Activated CD4-positive, alpha-beta memory T cell treated with anti-CD3 and anti-CD28 coated beads for 36 hours (primary cell): ENCODE measurements at regions of chr7 and their contacts with region 1.

Region 1: DNA sequence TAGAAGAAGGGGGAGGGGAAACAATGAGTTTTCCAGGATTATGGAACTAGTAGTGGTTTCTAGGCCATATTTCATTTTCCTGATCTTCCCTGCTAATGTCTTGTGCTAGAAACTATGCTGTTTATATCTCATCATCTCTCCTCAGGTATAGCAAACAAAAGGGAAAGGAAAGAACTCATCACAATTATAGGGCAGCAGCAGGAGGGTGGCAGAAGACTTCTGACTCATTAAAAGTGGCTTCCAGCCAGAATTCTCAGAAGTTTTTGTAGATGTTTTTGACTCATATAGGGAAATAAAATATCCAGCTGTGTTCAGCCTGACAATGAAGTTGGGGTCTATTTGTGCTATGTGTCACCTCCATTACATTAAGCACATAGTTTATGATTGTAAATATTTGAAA is 6.5 kb downstream of the AHR start:
- DNase-seq: peak; percentile 25
- H3K4me3 Mint-ChIP-seq: peak overlapping the region; percentile 56
- H3K27ac Mint-ChIP-seq: peak overlapping the region; percentile 83
- H3K4me1 Mint-ChIP-seq: peaks cover 26% of the 10 kb centered on the region
- H3K27me3 Mint-ChIP-seq: no peaks in the 10 kb centered on the region

Region 2: DNA sequence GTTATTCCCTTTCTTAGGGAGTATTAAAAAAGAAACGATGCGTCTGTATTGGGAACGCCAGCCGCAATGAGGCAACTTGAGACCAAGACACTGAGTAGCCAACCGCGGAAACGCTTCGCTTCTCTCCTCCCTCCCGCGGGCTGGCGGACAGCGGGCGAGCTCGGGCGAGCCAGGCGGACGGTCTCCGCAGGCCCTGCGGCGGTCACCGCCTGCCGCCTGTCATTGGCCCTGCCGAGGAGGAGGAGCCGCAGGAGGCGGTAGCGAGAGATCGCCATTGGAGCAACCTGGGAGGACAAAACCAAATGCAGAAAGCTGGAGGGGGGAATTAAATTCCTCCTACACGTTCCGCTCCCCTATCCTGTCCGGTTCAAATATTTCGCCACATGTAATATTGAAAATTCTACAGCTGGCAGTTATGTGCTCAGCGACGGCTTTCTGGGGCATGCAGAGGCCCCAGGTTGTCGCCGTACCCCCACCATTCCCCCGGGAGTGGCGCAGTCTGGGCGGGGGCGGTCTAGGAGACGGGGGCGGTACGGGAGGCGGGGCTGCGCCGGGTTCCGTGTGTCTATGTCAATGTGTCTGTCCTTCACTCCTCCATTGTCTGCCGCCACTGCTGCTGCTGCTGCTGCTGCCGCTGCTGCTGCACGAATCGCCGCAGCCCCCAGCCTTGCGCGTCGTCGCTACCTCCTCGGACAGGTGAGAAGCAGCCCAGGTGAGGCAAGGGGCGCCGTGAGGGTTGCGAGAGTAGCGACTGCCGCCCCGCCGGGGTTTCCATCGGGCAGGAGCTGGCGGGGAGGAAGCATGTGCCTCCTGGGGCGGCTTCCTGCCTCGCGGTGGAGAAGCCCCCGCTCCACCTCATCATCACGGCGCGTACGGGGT is 659.1 kb before region 1 on chr7 and contains the starts of genes ANKMY2 and BZW2:
- CTCF ChIA-PET with region 1: no interaction called
- POLR2A ChIA-PET with region 1: no interaction called
- intact Hi-C with region 1: loop called (anchors 1 kb)
- DNase-seq: peak; percentile 95
- H3K4me3 Mint-ChIP-seq: peak within 1 kb of the TSS; percentile 99
- H3K27ac Mint-ChIP-seq: peak within 1 kb of the TSS; percentile 98
- H3K4me1 Mint-ChIP-seq: peaks cover 53% of the 10 kb centered on the region
- H3K27me3 Mint-ChIP-seq: no peaks in the 10 kb centered on the region
- total RNA-seq, gene ANKMY2: 7.8 to 8.4 TPM
- total RNA-seq, gene BZW2: 84.2 to 89.8 TPM

Region 3: DNA sequence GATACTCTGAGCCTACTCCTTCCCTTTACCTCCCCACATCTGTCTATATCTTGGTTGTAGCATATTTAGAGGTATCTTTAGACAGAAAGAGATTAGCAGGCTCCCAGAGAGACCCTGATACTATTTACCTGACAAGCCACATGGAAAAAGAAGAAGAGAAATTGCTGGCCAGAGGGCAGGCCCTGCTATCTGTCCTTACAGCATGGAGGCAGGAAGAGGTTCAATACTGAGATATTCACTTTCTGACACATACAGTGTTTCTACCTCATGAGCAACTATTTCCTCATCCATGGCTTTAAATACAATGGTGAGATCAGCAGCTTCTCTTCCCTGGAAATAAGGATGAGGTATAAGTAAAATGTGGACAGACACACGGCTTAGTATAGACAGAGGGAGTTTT is 585.2 kb before region 1 on chr7:
- CTCF ChIA-PET with region 1: no interaction called
- POLR2A ChIA-PET with region 1: no interaction called
- intact Hi-C with region 1: no loop called
- DNase-seq: no peak
- H3K4me3 Mint-ChIP-seq: no peak overlapping the region
- H3K27ac Mint-ChIP-seq: no peak overlapping the region
- H3K4me1 Mint-ChIP-seq: peaks cover 11% of the 10 kb centered on the region
- H3K27me3 Mint-ChIP-seq: no peaks in the 10 kb centered on the region

Region 4: DNA sequence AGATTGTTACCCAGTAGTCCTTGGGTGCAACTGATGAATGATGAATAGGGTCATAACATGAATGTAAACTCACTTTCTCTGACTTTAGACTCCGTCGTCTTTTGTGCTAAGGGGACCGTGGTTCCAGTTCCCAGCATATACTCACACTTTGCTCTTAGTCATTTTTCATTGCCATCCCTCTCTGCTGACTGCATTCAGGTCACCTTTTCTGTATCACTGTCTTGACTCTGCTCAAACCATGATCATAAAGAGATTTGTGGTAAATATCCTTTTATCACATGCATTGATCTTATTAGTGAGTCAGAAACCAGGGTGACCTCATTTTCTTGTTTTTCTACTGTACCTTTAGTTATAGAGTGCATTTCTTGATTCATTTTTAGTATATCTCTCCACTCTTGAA is 282.0 kb before region 1 on chr7:
- CTCF ChIA-PET with region 1: no interaction called
- POLR2A ChIA-PET with region 1: no interaction called
- intact Hi-C with region 1: loop called (anchors 1 kb)
- DNase-seq: peak; percentile 60
- H3K4me3 Mint-ChIP-seq: no peak overlapping the region
- H3K27ac Mint-ChIP-seq: peak overlapping the region; percentile 7
- H3K4me1 Mint-ChIP-seq: peaks cover 17% of the 10 kb centered on the region
- H3K27me3 Mint-ChIP-seq: peaks cover 1% of the 10 kb centered on the region

Region 5: GRCh38 chr7:17159500-17160037 is 145.4 kb before region 1 on chr7:
- CTCF ChIA-PET with region 1: interaction called, 3 read pairs
- POLR2A ChIA-PET with region 1: no interaction called
- intact Hi-C with region 1: loop called (anchors 1 kb)
- DNase-seq: peak; percentile 33
- H3K4me3 Mint-ChIP-seq: no peak overlapping the region
- H3K27ac Mint-ChIP-seq: peak overlapping the region; percentile 70
- H3K4me1 Mint-ChIP-seq: peaks cover 38% of the 10 kb centered on the region
- H3K27me3 Mint-ChIP-seq: peaks cover 14% of the 10 kb centered on the region

Region 6: DNA sequence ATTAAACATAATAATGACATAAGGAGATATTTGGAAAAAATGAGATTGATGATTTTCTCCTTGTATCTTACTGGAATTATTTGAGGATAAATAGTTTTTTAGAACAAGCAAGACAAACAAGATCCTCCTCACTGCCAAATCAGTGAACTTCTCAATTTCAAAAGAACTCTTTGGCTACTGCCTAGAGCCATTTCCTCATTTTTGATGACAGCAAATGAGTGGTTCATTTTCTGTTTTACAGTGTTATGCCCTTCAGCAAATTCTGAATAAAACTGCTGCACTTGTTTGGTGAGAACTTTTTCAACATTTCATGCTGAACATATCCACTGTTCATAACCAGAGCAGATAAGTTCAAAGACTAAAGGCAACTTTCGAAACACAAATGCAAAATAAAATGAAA is 49.0 kb before region 1 on chr7:
- CTCF ChIA-PET with region 1: interaction called, 7 read pairs
- POLR2A ChIA-PET with region 1: interaction called, 3 read pairs
- intact Hi-C with region 1: loop called (anchors 1 kb)
- DNase-seq: no peak
- H3K4me3 Mint-ChIP-seq: no peak overlapping the region
- H3K27ac Mint-ChIP-seq: no peak overlapping the region
- H3K4me1 Mint-ChIP-seq: peaks cover 21% of the 10 kb centered on the region
- H3K27me3 Mint-ChIP-seq: no peaks in the 10 kb centered on the region

Region 7: GRCh38 chr7:17362439-17363105 is 57.6 kb after region 1 on chr7:
- CTCF ChIA-PET with region 1: no interaction called
- POLR2A ChIA-PET with region 1: no interaction called
- intact Hi-C with region 1: no loop called
- DNase-seq: no peak
- H3K4me3 Mint-ChIP-seq: no peak overlapping the region
- H3K27ac Mint-ChIP-seq: no peak overlapping the region
- H3K4me1 Mint-ChIP-seq: peaks cover 2% of the 10 kb centered on the region
- H3K27me3 Mint-ChIP-seq: no peaks in the 10 kb centered on the region

Region 8: GRCh38 chr7:17492437-17492836 is 187.5 kb after region 1 on chr7:
- CTCF ChIA-PET with region 1: no interaction called
- POLR2A ChIA-PET with region 1: no interaction called
- intact Hi-C with region 1: loop called (anchors 1 kb)
- DNase-seq: no peak
- H3K4me3 Mint-ChIP-seq: no peak overlapping the region
- H3K27ac Mint-ChIP-seq: no peak overlapping the region
- H3K4me1 Mint-ChIP-seq: peaks cover 11% of the 10 kb centered on the region
- H3K27me3 Mint-ChIP-seq: no peaks in the 10 kb centered on the region

Region 9: GRCh38 chr7:17554341-17555015 is 249.6 kb after region 1 on chr7:
- CTCF ChIA-PET with region 1: no interaction called
- POLR2A ChIA-PET with region 1: no interaction called
- intact Hi-C with region 1: loop called (anchors 5 kb)
- DNase-seq: no peak
- H3K4me3 Mint-ChIP-seq: no peak overlapping the region
- H3K27ac Mint-ChIP-seq: no peak overlapping the region
- H3K4me1 Mint-ChIP-seq: peaks cover 6% of the 10 kb centered on the region
- H3K27me3 Mint-ChIP-seq: no peaks in the 10 kb centered on the region